Upper lobe of right lung (tissue), 1 donor: ENCODE measurements at regions of chr19 and their contacts with region 1.

Region 1: GRCh38 chr19:4851551-4852290 is 15.7 kb downstream of the PLIN3 start:
- DNase-seq: peak; percentile 83
- ATAC-seq: peak; percentile 93
- H3K4me3 ChIP-seq: no peak overlapping the region
- H3K27ac ChIP-seq: no peak overlapping the region
- H3K4me1 ChIP-seq: no peaks in the 10 kb centered on the region
- H3K27me3 ChIP-seq: no peaks in the 10 kb centered on the region
- CTCF ChIP-seq: peak; percentile 87

Region 2: GRCh38 chr19:4803736-4804695 is 47.7 kb before region 1 on chr19:
- intact Hi-C with region 1: loop called (anchors 5 kb)
- DNase-seq: peak; percentile 80
- ATAC-seq: peak; percentile 72
- H3K4me3 ChIP-seq: no peak overlapping the region
- H3K27ac ChIP-seq: no peak overlapping the region
- H3K4me1 ChIP-seq: no peaks in the 10 kb centered on the region
- H3K27me3 ChIP-seq: no peaks in the 10 kb centered on the region
- CTCF ChIP-seq: peak; percentile 78